HCT116 (cell line): ENCODE measurements at regions of chr11 and their contacts with region 1.

Region 1: DNA sequence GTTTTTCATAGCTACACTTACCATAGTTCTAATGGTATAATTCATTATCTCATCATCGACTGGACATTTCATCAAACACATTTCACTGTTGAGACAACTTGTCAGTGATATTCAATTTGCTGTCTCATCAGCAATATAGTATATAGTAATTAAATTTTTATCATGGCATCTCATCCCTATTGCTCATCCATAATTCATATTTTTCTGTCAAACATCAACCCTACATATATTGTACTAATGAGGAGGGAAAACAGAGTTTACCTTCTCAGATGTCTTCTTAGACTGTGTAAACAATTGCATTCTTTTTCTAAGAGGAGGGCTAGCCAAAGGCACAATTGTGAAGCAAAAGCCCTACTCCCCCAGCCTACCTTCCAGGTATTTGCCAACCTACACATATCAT is 420.2 kb downstream of the DLG2 start:
- DNase-seq: no peak
- ATAC-seq: no peak
- H3K4me3 ChIP-seq: no peak overlapping the region
- H3K27ac ChIP-seq: no peak overlapping the region
- H3K4me1 ChIP-seq: no peaks in the 10 kb centered on the region
- H3K27me3 ChIP-seq: no peaks in the 10 kb centered on the region; the same call in 1 of the 2 replicates
- CTCF ChIP-seq: no peak
- POLR2A ChIP-seq: no peak
- RAD21 ChIP-seq: no peak

Region 2: DNA sequence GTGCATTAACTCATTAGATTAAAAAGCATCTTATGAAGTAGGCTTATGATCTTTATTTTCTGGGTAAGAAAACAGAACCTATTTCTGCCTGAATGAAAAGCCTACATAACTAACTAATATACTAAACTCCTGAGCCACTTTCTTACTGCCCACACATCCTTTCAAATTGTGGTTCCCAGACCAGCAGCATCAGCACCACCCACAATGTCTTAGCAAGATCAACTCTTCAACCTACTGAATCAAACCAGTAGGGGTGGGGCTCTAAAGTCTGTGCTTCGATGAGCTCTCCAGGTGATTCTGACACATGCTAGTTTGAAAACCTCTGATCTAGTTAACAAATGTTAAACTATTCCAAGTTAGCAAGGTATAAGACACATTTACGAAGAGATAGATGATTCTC is 42.2 kb before region 1 on chr11:
- CTCF ChIA-PET with region 1: no interaction called
- POLR2A ChIA-PET with region 1: no interaction called
- RAD21 ChIA-PET with region 1: no interaction called
- intact Hi-C with region 1: loop called (anchors 5 kb)
- DNase-seq: no peak
- ATAC-seq: no peak
- H3K4me3 ChIP-seq: no peak overlapping the region
- H3K27ac ChIP-seq: no peak overlapping the region
- H3K4me1 ChIP-seq: peaks cover under 1 to 7% of the 10 kb centered on the region in 2 experiments
- H3K27me3 ChIP-seq: no peaks in the 10 kb centered on the region
- CTCF ChIP-seq: no peak
- POLR2A ChIP-seq: no peak
- RAD21 ChIP-seq: no peak

Region 3: DNA sequence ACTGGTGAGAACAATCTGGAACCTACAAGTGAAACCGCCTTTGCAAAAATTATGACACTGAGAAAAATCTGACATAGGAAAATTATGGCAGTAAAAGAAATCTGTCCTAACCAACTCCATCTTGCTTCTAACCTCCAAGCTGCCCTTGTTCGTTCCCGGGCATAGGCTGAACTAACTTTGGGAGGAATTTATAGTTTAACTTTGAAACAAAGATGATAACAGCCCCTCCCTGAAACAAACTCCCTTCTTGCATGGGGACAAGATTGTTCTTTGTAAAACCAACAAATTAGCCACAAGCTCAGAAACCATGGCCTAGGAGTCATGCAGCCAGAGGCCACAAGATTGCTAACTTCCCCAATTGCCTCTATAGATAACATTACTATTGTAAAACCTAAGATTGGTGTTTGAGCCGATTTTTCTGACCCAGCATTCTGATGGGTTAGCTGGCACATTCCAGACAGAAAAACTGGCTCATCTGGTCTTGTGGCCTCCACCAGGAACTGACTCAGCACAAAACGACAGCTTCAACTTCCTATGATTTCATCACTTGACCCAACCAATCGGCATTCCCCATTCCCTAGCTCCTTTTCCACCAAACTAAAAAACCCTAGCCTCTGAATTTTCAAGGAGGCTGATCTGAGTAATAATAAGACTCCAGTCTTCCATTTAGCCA is 1164.1 kb after region 1 on chr11:
- CTCF ChIA-PET with region 1: no interaction called
- POLR2A ChIA-PET with region 1: no interaction called
- RAD21 ChIA-PET with region 1: no interaction called
- intact Hi-C with region 1: no loop called
- DNase-seq: no peak
- ATAC-seq: no peak
- H3K4me3 ChIP-seq: no peak overlapping the region
- H3K27ac ChIP-seq: no peak overlapping the region
- H3K4me1 ChIP-seq: peaks cover 0 to 9% of the 10 kb centered on the region in 2 experiments; a peak in 2 of 4 replicates
- H3K27me3 ChIP-seq: no peaks in the 10 kb centered on the region
- CTCF ChIP-seq: no peak
- POLR2A ChIP-seq: no peak
- RAD21 ChIP-seq: no peak